Dorsolateral prefrontal cortex (tissue), 120 donors: ENCODE measurements at regions of chr10 and their contacts with region 1.

Region 1: GRCh38 chr10:110918643-110919363 is at the start of gene BBIP1:
- DNase-seq: peak in 4 of 10 donors; percentile 55 to 90 (median 77)
- H3K4me3 ChIP-seq: peak within 1 kb of the TSS; percentile 67 to 97 (median 86)
- H3K27ac ChIP-seq: peak within 1 kb of the TSS; percentile 74 to 100 (median 97)
- H3K27me3 ChIP-seq: no peaks in the 10 kb centered on the region
- CTCF ChIP-seq: peak in 26 of 56 donors; percentile 1 to 37 (median 13)
- total RNA-seq, gene BBIP1: 34.7 to 77.1 (median 51.3) TPM

Region 2: DNA sequence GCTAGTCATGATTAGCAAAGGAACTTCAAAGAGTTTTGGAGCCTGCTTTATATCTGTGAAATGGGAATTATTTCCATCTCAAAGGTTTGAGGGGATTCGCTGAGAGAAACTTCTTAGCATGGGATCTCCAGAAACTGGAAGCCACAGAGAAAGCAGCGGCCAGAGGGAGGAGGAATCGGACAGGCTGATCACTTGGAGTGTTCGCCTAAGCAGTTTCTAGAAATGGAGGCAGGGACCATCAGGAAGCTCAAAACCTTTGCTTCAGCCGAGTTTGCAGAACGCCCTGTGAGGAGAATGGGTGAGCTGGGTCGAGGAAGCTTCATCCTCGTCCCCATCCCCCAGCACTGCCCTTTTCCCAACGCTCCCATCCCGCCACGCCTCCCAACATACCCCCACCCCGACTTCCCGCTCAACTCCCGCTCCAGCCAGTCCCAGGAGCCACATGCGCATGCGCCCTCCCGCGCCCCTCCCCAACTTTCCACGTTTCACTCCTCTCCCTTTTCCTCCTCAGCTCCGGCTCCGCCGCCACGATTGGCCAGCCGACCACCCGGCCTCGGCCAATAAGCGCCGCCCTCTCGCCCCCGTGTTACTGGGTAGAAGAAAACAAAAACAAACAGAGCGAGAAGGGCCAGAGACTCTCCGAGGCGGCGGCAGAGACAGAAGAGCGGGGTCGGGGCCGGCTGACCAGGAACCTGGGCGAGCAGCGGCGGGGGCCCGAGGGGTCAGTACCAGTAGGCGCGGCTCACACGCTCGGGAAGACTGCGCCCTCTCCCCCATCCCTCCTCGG is 47.3 kb before region 1 on chr10 and contains the start of gene PDCD4:
- intact Hi-C with region 1: loop called in 1 of 2 experiments (anchors 2 kb)
- DNase-seq: peak; percentile 99 to 100 (median 100)
- H3K4me3 ChIP-seq: peak within 1 kb of the TSS; percentile 53 to 99 (median 94)
- H3K27ac ChIP-seq: peak within 1 kb of the TSS; percentile 78 to 99 (median 98)
- H3K27me3 ChIP-seq: no peaks in the 10 kb centered on the region
- CTCF ChIP-seq: peak in 15 of 56 donors; percentile 3 to 22 (median 6)
- total RNA-seq, gene PDCD4: 45.2 to 105 (median 67.9) TPM